GM10248 (cell line): ENCODE measurements at regions of chr17 and their contacts with region 1.

Region 1: DNA sequence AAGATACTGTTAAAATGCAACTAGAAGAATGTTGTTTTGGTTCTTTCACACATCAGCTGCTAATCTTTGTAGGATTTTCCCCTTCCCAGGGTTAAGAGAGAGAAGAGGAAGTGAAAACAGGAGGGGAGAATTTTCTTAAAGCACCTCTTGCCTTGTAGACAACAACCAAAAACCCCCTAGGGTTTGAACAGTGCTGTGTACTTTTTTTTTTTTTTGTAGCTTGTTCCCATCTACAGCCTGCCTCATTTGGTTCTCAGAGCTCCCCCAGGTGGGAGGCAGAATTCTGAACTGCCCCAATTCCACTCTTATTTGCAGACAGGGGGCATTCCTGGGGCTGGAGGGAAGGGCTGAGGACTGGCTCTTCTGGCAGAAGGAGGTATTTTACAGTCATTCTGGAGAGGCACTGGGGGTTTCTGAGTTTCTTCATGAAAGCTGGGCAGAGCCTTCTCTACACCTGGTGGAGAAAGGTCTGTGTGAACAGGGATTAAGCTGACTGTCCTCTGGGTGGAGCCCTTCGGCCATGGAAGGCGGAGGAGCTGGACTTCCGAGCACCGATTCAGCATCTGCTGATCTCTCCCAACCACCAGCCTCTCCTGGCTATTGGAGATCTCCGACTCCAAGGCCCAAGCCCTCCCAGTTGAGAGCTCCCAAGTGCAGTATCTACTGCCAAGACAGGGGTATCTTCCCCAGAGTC is 32.2 kb downstream of the SMARCE1 start:
- DNase-seq: peak; percentile 81
- CTCF ChIP-seq: peak; percentile 61

Region 2: DNA sequence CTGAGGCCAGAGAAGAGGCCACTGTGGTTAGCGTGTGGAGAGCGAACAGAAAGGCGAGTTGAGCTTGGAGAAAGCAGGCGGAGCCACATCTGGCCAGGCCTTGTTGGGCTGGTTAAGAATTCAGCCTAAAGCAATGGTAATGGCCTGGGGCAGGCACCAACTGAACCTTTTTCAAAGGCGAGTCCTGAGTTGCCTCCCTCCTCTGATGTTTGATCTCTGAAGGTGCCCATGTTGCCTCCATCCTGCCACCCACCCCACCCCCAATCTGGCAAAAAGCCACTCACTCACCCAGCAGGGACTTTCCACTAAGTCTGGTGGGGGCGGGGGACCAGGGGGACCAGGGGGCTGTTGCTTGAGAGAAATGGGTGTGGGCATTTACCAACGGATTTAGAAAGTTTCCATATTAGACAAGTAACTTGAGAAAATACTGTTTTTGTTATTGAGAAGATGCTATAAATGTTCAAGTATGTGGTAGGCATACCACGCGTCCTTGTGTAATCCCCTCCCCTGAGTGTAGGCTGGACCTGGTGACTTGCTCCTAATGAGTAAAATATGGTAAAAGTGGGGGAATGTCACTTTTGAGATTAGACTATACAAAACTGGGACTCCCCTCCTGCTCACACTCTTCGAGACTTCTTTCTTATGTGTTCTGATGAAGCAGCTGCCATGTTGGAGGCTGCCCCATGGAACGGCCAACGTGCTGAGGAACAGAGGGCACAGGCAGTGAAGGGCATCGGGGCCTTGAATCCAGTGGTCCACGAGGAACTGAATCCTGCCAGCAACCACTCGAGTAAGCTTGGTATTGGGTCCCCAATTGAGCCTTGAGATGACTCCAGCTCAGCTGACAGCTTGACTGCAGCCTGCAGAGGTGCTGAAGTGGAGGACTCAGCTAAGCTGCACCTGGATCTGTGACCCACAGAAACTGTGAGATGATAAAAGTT is 84.1 kb before region 1 on chr17:
- CTCF ChIA-PET with region 1: interaction called, 16 read pairs
- POLR2A ChIA-PET with region 1: interaction called, 4 read pairs
- DNase-seq: peak; percentile 51
- CTCF ChIP-seq: no peak

Region 3: DNA sequence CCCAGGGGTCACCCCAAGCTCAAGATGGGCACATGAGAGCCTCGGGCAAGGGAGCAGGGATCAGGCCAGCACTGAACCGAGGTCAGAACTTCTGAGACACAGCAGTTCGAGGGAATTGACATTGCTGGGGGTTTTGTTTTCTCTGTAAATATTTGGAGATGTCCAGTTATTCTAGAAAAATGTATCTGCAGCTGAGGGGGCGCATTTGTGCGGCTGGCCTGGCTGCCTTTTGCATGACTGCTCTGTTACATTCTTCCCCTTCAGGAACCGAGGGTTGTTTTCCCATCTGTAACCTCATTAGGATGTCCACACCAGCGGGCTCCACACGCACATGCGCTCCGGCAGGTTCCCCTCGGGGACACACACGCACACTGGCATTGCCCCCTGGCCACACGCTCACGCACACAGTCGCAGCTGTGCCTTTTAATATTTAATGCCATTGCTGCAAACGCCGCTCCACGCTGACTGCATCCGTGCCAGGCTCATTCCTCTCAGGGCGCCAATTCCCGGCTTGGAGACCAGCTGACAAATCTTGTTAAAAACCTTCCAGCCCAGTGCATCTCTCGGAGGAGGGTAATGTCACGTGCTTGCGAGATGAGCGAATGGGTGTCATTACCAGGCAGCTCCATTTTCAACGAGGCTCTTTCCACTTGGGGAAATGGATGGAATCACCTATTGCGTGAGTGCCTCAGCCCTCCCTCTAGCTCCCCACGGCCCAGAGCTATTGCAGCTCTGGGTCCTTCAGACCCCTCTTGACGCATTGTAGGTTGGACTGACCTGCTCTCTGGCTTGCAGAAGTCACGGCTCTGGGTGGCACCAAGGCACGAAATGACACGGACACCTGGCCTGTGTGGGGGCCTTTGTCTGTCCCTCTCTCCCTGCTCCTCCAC is 63.3 kb before region 1 on chr17:
- CTCF ChIA-PET with region 1: interaction called, 127 read pairs
- POLR2A ChIA-PET with region 1: interaction called, 21 read pairs
- DNase-seq: no peak
- CTCF ChIP-seq: no peak

Region 4: GRCh38 chr17:40582328-40582901 is 33.0 kb before region 1 on chr17:
- CTCF ChIA-PET with region 1: interaction called, 24 read pairs
- POLR2A ChIA-PET with region 1: interaction called, 14 read pairs
- DNase-seq: peak; percentile 64
- CTCF ChIP-seq: no peak

Region 5: GRCh38 chr17:40598663-40599467 is 16.6 kb before region 1 on chr17:
- CTCF ChIA-PET with region 1: interaction called, 72 read pairs
- POLR2A ChIA-PET with region 1: interaction called, 17 read pairs
- DNase-seq: peak; percentile 74
- CTCF ChIP-seq: no peak

Region 6: DNA sequence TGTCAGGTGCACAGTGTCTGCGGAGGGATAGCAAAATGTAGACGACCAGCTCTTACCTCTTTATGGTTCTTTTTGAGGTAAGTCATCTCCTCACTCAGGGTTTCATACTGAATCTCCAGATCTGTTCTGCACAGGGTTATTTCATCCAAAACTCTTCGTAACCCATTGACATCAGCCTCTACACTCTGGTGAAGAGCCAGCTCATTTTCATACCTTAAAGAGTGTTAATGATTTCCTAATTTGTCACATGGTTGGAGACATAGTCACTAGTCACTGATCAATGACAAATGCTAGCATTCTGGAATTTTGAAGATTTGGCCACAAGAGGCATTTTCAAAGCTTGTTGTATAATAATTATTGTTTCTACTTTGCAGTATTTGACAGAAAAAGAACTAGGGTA is 138.4 kb after region 1 on chr17:
- CTCF ChIA-PET with region 1: no interaction called
- POLR2A ChIA-PET with region 1: no interaction called
- DNase-seq: no peak
- CTCF ChIP-seq: no peak

Region 7: GRCh38 chr17:40791787-40792436 is 176.5 kb after region 1 on chr17:
- CTCF ChIA-PET with region 1: interaction called, 11 read pairs
- POLR2A ChIA-PET with region 1: no interaction called
- DNase-seq: no peak
- CTCF ChIP-seq: peak; percentile 41

Region 8: DNA sequence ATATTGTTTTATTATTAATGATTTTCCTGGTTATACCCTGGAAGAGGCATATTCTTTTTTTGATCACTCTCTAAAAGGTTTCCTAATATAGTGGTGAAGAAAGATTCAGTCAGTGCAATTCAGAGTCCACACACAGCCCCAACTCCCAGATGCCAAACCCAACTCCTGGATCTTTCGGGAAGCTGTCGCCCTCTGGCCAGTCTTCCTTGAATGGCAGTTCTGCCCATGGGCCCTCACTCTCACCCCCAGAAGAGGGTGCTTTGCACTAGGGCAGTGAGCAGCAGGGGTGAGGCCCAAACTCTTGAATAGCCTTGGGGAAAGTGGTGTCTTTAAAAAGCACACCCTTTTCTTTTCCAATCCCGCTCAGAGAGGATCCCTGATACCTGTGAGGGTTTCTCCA is 840.8 kb after region 1 on chr17:
- CTCF ChIA-PET with region 1: no interaction called
- POLR2A ChIA-PET with region 1: no interaction called
- DNase-seq: no peak
- CTCF ChIP-seq: no peak